Stomach (tissue), 19 donors: ENCODE measurements at regions of chr5 and their contacts with region 1.

Region 1: DNA sequence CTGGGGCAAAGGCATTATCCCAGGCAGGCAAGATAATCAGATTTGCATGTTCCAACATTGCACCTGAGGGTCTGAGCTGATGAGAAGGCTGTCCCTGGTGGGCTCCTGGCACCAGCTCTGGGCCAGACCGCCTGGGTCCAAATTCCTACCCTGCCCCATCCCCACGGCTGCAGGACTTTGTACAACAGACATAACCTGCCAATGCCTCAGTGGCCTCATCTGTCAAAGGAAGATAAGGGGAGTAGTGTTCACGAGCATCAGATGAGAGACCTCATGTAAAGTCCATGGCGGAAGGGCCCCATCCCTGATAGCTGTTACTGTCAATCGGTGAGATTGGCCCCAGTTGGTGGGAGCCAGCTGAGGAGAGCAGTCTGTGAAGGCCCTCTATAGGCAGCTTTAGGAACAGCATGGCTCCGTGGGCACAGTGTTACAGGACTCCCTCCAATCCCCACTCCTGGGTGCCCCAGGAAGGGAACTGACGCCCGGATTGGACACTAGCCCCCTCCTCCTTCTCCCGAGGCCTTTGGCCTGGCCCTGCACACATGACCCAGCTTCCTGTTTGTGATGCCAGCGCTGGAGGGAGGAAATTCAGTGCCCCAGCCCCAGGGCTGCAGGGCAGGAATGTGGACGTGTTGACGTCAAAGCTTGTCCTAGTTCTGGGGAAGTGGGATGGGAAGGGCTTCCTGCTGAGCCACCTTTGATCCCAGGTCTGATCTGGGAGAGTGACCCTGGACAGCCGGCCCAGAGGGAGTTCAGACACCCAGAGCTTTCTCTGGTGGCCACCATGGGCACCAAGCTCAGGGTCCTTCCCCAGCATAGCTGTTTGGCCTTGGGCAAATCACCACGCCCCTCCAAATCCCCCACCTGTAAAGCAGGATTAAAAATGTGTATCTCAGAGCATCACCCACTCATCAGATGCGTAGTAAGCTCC is 56.2 kb downstream of the DUSP1 start:
- DNase-seq: peak; percentile 79 to 87
- H3K4me3 ChIP-seq: no peak overlapping the region
- H3K27ac ChIP-seq: peak overlapping the region; percentile 7 to 75 (median 61)
- H3K4me1 ChIP-seq: peaks cover 24 to 41% (median 30%) of the 10 kb centered on the region in 4 donors
- H3K27me3 ChIP-seq: peaks cover 0 to 14% (median 6%) of the 10 kb centered on the region in 3 donors
- CTCF ChIP-seq: peak in 5 of 7 experiments; percentile 74 to 97 (median 90)
- EP300 ChIP-seq: peak; percentile 72
- POLR2A ChIP-seq: no peak

Region 2: GRCh38 chr5:172106511-172107356 is 608.0 kb before region 1 on chr5:
- intact Hi-C with region 1: no loop called
- DNase-seq: peak; percentile 59 to 84
- H3K4me3 ChIP-seq: peak overlapping the region; percentile 9 to 28 (median 22)
- H3K27ac ChIP-seq: peak overlapping the region in 1 of 5 donors; percentile 50
- H3K4me1 ChIP-seq: peaks cover 33 to 70% (median 52%) of the 10 kb centered on the region in 4 donors
- H3K27me3 ChIP-seq: no peaks in the 10 kb centered on the region
- CTCF ChIP-seq: peak in 5 of 7 experiments; percentile 87 to 99 (median 96)
- EP300 ChIP-seq: no peak
- POLR2A ChIP-seq: no peak

Region 3: DNA sequence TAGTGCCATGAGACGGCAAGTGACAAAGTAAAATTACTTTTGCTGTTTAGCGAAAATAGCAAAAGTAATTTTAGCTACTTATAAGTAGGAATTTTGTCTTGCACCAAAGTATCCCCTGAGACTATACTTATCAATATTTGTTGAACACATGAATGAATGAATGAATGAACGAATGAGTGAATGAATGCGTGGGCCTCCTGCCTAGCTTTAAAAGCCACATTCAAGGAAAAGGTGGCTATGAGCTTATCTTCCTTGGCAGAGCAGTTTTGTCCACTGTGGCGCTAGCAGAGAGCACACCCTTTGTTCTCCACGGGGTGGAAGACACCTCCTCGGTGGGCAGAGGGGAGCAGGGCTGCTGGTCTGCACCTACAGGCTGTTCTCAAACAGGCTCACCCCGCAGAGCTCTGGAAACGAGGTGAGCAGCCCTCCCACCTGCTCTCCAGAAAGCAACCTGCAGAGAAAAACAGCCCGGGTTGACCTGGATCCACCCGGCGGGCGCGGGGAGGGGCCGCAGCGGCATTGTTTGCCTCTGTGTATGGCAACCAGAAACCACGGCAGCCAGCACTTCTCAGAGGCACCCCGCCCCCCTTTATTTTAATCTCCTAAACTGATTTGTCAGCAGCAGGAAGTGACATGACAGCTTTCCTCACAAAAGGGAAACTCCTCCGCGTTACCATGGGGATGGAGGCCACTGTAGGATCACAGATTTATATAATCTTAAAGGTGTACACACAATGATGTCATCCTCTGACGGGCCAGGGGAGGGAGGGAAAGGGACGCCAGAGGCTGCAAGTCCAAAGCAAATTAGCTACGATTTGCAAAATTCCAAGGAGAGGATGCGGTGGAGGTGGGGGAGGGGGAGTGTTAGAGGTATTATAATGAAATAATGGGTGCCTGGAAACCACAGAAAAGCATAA is 50.4 kb after region 1 on chr5:
- intact Hi-C with region 1: loop called (anchors 10 kb)
- DNase-seq: peak; percentile 96 to 99
- H3K4me3 ChIP-seq: peak overlapping the region; percentile 27 to 83 (median 56)
- H3K27ac ChIP-seq: peak overlapping the region; percentile 92 to 100 (median 98)
- H3K4me1 ChIP-seq: peaks cover 22 to 56% (median 43%) of the 10 kb centered on the region in 4 donors
- H3K27me3 ChIP-seq: no peaks in the 10 kb centered on the region
- CTCF ChIP-seq: peak in 2 of 7 experiments; percentile 10 to 19
- EP300 ChIP-seq: peak; percentile 61
- POLR2A ChIP-seq: no peak

Region 4: GRCh38 chr5:172910828-172911627 is 196.3 kb after region 1 on chr5:
- intact Hi-C with region 1: no loop called
- DNase-seq: peak; percentile 55 to 75
- H3K4me3 ChIP-seq: no peak overlapping the region
- H3K27ac ChIP-seq: peak overlapping the region in 4 of 5 donors; percentile 63 to 98 (median 70)
- H3K4me1 ChIP-seq: peaks cover 8 to 49% (median 32%) of the 10 kb centered on the region in 4 donors
- H3K27me3 ChIP-seq: no peaks in the 10 kb centered on the region
- CTCF ChIP-seq: peak in 1 of 7 experiments; percentile 31
- EP300 ChIP-seq: no peak
- POLR2A ChIP-seq: no peak

Region 5: DNA sequence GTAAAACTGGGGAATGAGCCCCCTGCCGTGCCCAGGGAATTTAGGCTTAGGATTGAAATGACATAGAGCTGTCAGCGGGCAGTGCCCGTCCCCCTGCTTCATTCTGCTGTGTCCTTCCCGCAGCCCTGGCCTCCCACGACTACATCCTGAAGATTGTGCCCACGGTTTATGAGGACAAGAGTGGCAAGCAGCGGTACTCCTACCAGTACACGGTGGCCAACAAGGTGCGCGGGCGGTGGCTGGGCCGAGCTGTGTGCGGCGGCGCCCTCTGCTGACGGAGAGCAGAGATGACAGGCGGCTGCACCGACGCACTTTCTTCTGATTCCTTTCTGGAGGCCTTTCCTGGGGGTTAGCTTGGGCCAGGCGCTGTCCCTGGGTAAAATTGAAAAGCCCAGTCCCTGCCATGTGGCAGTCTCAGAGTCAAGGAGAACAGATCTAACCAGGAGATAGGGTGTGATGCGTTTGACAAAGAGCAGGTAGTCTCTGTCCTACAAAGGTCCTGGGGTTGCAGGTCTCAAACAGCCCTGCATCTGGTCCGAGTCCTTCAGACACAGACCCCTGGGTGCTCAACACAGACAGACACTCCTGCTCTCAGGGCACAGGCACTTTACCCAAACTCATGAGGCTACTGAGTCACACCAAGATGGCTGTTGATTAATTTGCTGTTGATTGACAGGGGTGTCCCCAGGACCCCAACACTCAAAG is 217.7 kb after region 1 on chr5:
- intact Hi-C with region 1: loop called (anchors 2 kb)
- DNase-seq: peak; percentile 86 to 90
- H3K4me3 ChIP-seq: no peak overlapping the region
- H3K27ac ChIP-seq: peak overlapping the region in 3 of 5 donors; percentile 45 to 95 (median 79)
- H3K4me1 ChIP-seq: peaks cover 0 to 24% (median 15%) of the 10 kb centered on the region in 4 donors
- H3K27me3 ChIP-seq: no peaks in the 10 kb centered on the region
- CTCF ChIP-seq: peak in 5 of 7 experiments; percentile 92 to 96 (median 95)
- EP300 ChIP-seq: no peak
- POLR2A ChIP-seq: no peak